Caco-2 (cell line): ENCODE measurements at regions of chr1 and their contacts with region 1.

Region 1: GRCh38 chr1:228781161-228781808 is 46.0 kb downstream of the RHOU start:
- DNase-seq: no peak
- H3K4me3 ChIP-seq: no peak overlapping the region
- H3K4me3 Mint-ChIP-seq: no peak overlapping the region
- H3K27ac Mint-ChIP-seq: no peak overlapping the region
- H3K4me1 ChIP-seq: peaks cover 40% of the 10 kb centered on the region
- H3K4me1 Mint-ChIP-seq: peaks cover 16% of the 10 kb centered on the region
- H3K27me3 ChIP-seq: no peaks in the 10 kb centered on the region
- H3K27me3 Mint-ChIP-seq: no peaks in the 10 kb centered on the region
- CTCF ChIP-seq: no peak

Region 2: DNA sequence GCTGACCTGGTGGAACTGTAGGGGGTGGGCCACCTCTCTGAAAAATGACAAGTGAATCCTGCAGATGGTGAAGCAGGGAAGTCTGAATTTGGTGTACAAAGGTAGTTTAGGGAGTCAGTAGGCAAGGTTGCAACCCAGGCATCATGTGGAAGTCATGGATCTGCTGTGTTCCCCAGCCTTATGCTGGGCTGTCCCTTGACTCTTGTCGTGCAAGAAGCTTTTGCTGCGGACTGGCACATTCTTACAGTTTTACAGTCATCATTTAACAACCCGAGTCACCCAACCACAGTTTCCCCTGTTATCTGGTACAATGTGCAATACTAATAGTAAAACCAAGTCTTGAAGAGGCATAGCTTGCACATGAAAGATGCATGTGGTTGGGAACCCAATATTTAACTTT is 32.9 kb before region 1 on chr1:
- CTCF ChIA-PET with region 1: no interaction called
- POLR2A ChIA-PET with region 1: no interaction called
- intact Hi-C with region 1: loop called (anchors 5 kb)
- DNase-seq: no peak
- H3K4me3 ChIP-seq: no peak overlapping the region
- H3K4me3 Mint-ChIP-seq: no peak overlapping the region
- H3K27ac Mint-ChIP-seq: peak overlapping the region; percentile 0
- H3K4me1 ChIP-seq: peaks cover 20% of the 10 kb centered on the region
- H3K4me1 Mint-ChIP-seq: peaks cover 25% of the 10 kb centered on the region
- H3K27me3 ChIP-seq: no peaks in the 10 kb centered on the region
- H3K27me3 Mint-ChIP-seq: no peaks in the 10 kb centered on the region
- CTCF ChIP-seq: no peak

Region 3: DNA sequence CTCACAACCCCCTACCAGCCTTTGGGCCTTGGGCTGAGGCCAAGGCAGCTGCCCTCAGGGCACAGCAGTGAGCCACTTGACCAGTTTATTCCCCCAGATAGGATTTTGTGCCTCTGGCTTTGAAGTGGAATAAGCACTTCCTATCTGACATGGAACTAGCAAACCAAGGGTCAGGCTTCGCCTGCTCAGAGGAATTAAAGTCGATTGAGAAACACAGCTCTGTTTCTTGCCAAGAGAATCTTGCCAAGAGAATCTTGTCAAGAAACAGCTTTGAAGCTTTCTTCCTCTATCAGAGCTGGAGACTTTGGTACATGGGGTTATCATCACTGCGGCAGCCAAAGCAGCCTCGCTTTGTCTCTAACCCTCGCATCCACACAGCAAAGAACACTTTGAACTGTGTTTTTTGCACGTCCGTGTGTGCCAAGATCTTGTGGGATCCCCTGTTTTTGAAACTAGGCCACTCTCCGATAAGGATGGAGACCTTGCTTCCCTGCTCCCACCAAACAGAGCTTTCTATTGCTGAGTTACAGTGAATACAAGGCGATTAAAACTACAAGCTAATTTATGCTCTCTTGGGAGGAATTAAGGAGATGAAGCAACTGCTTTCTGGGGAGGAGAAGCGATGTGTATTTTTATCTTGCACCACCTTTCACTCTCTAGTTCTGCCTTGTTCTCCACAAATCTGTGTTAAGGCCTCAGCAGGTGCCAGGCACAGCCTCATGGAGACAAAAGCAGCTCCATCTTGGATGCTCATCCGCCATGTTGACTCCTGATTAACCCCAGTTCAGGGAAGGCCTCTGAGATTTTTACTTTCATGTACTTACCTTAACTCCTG is 21.3 kb after region 1 on chr1:
- CTCF ChIA-PET with region 1: no interaction called
- POLR2A ChIA-PET with region 1: no interaction called
- intact Hi-C with region 1: loop called (anchors 2 kb)
- DNase-seq: no peak
- H3K4me3 ChIP-seq: no peak overlapping the region
- H3K4me3 Mint-ChIP-seq: no peak overlapping the region
- H3K27ac Mint-ChIP-seq: no peak overlapping the region
- H3K4me1 ChIP-seq: peaks cover 23% of the 10 kb centered on the region
- H3K4me1 Mint-ChIP-seq: peaks cover 10% of the 10 kb centered on the region
- H3K27me3 ChIP-seq: no peaks in the 10 kb centered on the region
- H3K27me3 Mint-ChIP-seq: no peaks in the 10 kb centered on the region
- CTCF ChIP-seq: no peak